ENCODE measurements at regions of chr3 and their contacts with region 1.

Region 1: GRCh38 chr3:124019291-124019690 is 27.4 kb upstream of the ROPN1 start:
- DNase-seq: no peak

Region 2: DNA sequence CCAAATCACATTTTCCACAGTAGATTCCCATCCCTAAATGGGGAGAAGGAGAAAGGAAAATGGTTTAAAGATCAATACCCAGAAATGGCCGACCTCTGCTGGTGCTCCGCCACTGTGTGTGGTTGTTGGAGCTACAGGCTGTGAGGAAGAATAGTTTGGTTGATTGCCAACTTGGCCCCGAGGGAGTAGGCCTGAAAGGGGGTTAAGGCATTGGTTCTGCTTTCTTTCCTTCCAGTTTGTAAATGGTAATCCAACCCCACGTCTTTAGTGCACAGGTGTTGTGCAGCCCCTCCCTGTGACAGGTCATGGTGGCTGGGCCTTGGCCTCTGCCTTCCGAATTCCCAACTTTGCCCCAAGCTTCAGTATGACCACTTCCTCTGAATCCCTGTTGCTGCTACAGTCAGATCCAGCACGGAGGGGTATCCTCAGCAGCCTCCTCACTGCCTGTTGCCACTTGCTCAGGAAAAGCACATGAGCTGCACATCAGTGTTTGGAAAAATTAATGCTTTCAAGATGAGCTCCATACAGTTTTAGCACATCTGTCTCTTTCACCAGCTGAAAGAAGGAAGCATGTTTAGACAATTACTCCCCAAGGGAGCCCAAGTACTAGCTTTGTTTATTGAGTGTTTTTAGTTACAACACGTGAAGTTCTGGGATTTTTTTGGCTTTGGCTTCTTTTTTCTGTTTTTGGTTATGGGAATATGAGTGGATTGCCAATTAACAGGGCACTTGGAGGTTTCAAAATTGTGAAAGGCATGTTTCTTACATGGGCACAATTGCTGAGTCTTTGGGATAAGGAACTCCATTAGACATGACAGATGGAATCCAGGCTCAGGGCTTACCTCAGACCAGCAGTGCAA is 65.0 kb after region 1 on chr3:
- intact Hi-C with region 1: loop called (anchors 5 kb)
- DNase-seq: no peak

Region 3: GRCh38 chr3:124699686-124700396 is 680.5 kb after region 1 on chr3:
- intact Hi-C with region 1: no loop called
- DNase-seq: no peak